ENCODE measurements at regions of chr21 and their contacts with region 1.

Region 1: DNA sequence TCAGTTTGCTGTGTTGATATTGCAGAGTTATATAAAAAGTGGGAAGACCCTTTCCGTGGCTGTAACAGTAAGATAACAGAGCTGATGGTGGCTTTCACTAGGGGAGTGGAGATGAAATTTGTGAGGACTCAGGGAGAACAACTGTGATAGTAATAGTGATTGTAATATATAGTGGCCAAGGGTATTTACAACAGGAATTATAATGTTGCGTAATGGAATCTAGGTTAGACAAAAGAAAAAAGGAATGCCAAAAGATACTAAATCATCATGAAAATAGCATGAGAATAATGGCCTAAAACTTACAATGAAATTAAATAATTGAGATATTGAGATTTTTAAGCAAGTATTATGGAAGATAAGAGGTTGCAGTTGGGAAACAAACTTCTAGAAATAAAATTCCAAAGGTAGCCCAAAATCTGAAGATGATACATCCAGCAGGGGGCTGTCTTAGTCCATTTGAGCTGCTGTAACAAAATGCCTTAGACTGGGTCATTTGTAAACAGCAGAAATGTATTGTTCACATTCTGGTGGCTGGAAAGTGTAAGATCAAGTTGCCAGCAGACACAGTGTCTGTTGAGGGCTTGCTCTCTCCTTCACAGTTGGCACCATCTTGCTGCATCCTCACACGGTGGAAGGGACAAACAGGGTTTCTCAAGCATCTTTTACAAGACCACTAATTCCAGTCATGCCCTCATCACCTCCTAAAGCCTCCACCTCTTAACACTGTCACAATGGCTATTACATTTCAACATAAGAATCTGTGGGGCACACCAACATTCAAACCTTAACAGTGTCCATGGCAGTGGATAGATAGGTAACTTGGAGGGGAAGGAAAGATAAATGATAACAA is 711.2 kb downstream of the MRPL39 start:
- DNase-seq: peak; percentile 69
- H3K4me3 Mint-ChIP-seq: no peak overlapping the region
- H3K27ac Mint-ChIP-seq: no peak overlapping the region
- H3K4me1 Mint-ChIP-seq: peaks cover 7% of the 10 kb centered on the region
- H3K27me3 Mint-ChIP-seq: no peaks in the 10 kb centered on the region
- CTCF ChIP-seq: peak; percentile 45

Region 2: GRCh38 chr21:25313829-25314228 is 417.7 kb after region 1 on chr21:
- CTCF ChIA-PET with region 1: interaction called, 5 read pairs
- POLR2A ChIA-PET with region 1: no interaction called
- intact Hi-C with region 1: loop called (anchors 1 kb)
- DNase-seq: peak; percentile 33
- H3K4me3 Mint-ChIP-seq: no peak overlapping the region
- H3K27ac Mint-ChIP-seq: no peak overlapping the region
- H3K4me1 Mint-ChIP-seq: no peaks in the 10 kb centered on the region
- H3K27me3 Mint-ChIP-seq: no peaks in the 10 kb centered on the region
- CTCF ChIP-seq: peak; percentile 64

Measured in MCF 10A (cell line).